Sigmoid colon (tissue), 7 donors: ENCODE measurements at regions of chr1 and their contacts with region 1.

Region 1: DNA sequence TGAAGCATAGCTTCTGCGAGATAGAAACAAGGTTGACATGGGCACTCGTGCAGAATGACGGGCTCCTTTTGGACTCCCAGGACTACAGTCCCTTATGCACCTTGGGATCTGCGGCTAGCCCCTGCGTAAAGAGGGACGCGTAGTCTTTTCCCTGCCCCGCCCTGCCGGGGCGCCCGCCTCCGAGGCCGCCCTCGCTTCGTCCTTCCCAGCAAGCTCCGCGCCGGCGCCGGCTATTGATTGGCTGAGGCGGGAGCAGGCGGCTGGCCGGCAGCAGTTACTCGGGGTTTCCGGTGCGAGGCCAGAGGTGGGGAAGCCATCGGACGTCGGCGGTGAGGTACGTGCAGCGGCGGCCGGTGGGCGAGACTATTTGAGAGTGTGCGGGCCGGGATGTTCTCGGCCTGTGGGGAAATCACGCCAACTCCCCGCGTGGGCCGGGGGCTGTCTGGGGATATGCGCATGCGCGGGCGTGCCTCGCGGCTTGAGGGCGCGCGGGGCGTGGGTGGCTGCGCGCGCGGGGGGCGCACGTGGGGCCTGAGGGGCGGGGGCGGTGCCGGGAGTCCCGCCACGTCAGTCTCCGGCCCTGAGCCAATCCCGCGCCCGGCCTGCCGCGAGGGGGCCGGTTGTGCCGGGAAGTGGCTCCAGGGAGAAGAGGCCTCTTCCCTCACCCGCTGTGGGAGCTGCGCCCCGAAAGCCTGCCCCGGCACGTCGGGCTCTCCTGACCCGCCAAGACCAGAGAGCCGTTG is at the start of gene TXLNA:
- DNase-seq: peak; percentile 98
- H3K4me3 ChIP-seq: peak within 1 kb of the TSS; percentile 44 to 75 (median 59)
- H3K27ac ChIP-seq: peak within 1 kb of the TSS; percentile 90 to 95 (median 92)
- H3K4me1 ChIP-seq: peaks cover 0 to 53% (median 49%) of the 10 kb centered on the region in 4 donors
- H3K27me3 ChIP-seq: no peaks in the 10 kb centered on the region
- CTCF ChIP-seq: no peak
- EP300 ChIP-seq: no peak
- POLR2A ChIP-seq: peak; percentile 72 to 78
- total RNA-seq, gene TXLNA: 28.9 to 46.7 (median 36.7) TPM

Region 2: GRCh38 chr1:32013386-32014198 is 166.0 kb before region 1 on chr1 and contains the start of gene KHDRBS1:
- intact Hi-C with region 1: loop called (anchors 2 kb)
- DNase-seq: peak; percentile 100
- H3K4me3 ChIP-seq: peak within 1 kb of the TSS; percentile 74 to 100 (median 88)
- H3K27ac ChIP-seq: peak within 1 kb of the TSS; percentile 96 to 100 (median 99)
- H3K4me1 ChIP-seq: peaks cover 0 to 41% (median 35%) of the 10 kb centered on the region in 4 donors
- H3K27me3 ChIP-seq: no peaks in the 10 kb centered on the region
- CTCF ChIP-seq: no peak
- EP300 ChIP-seq: peak in 1 of 4 donors; percentile 82
- POLR2A ChIP-seq: peak; percentile 84 to 91
- total RNA-seq, gene KHDRBS1: 67.2 to 80.6 (median 73.6) TPM

Region 3: GRCh38 chr1:32107742-32108661 is 71.6 kb before region 1 on chr1 and contains the start of gene KPNA6:
- intact Hi-C with region 1: loop called (anchors 2 kb)
- DNase-seq: peak; percentile 95
- H3K4me3 ChIP-seq: peak within 1 kb of the TSS; percentile 80 to 97 (median 88)
- H3K27ac ChIP-seq: peak within 1 kb of the TSS; percentile 87 to 96 (median 92)
- H3K4me1 ChIP-seq: peaks cover 0 to 50% (median 44%) of the 10 kb centered on the region in 4 donors
- H3K27me3 ChIP-seq: no peaks in the 10 kb centered on the region
- CTCF ChIP-seq: no peak
- EP300 ChIP-seq: peak in 1 of 4 donors; percentile 12
- POLR2A ChIP-seq: peak; percentile 43 to 64
- total RNA-seq, gene KPNA6: 33.4 to 47.0 (median 41.6) TPM

Region 4: GRCh38 chr1:32221980-32222755 is 42.6 kb after region 1 on chr1 and contains the starts of genes EIF3I and TMEM234:
- intact Hi-C with region 1: loop called (anchors 1 kb)
- DNase-seq: peak; percentile 97
- H3K4me3 ChIP-seq: peak within 1 kb of the TSS; percentile 70 to 87 (median 73)
- H3K27ac ChIP-seq: peak within 1 kb of the TSS; percentile 88 to 91 (median 90)
- H3K4me1 ChIP-seq: peaks cover 0 to 32% (median 26%) of the 10 kb centered on the region in 4 donors
- H3K27me3 ChIP-seq: no peaks in the 10 kb centered on the region
- CTCF ChIP-seq: no peak
- EP300 ChIP-seq: peak in 1 of 4 donors; percentile 53
- POLR2A ChIP-seq: peak; percentile 61 to 71
- total RNA-seq, gene EIF3I: 163 to 178 (median 171) TPM
- total RNA-seq, gene TMEM234: 6.4 to 20.8 (median 10.1) TPM

Region 5: GRCh38 chr1:32291708-32292492 is 112.3 kb after region 1 on chr1 and contains the start of gene HDAC1:
- intact Hi-C with region 1: loop called (anchors 5 kb)
- DNase-seq: peak; percentile 98
- H3K4me3 ChIP-seq: peak within 1 kb of the TSS; percentile 69 to 92 (median 86)
- H3K27ac ChIP-seq: peak within 1 kb of the TSS; percentile 79 to 88 (median 85)
- H3K4me1 ChIP-seq: peaks cover 0 to 13% (median 9%) of the 10 kb centered on the region in 4 donors
- H3K27me3 ChIP-seq: no peaks in the 10 kb centered on the region
- CTCF ChIP-seq: no peak
- EP300 ChIP-seq: peak in 1 of 4 donors; percentile 7
- POLR2A ChIP-seq: peak; percentile 20 to 37
- total RNA-seq, gene HDAC1: 47.1 to 68.0 (median 55.6) TPM